ENCODE measurements at regions of chr16 and their contacts with region 1.

Region 1: GRCh38 chr16:20849587-20850390 is 43.5 kb downstream of the REXO5 start:
- DNase-seq: peak; percentile 42 to 69
- H3K4me3 ChIP-seq: no peak overlapping the region
- H3K27ac ChIP-seq: no peak overlapping the region
- H3K4me1 ChIP-seq: peaks cover 33% of the 10 kb centered on the region
- H3K27me3 ChIP-seq: no peaks in the 10 kb centered on the region
- CTCF ChIP-seq: peak; percentile 99

Region 2: DNA sequence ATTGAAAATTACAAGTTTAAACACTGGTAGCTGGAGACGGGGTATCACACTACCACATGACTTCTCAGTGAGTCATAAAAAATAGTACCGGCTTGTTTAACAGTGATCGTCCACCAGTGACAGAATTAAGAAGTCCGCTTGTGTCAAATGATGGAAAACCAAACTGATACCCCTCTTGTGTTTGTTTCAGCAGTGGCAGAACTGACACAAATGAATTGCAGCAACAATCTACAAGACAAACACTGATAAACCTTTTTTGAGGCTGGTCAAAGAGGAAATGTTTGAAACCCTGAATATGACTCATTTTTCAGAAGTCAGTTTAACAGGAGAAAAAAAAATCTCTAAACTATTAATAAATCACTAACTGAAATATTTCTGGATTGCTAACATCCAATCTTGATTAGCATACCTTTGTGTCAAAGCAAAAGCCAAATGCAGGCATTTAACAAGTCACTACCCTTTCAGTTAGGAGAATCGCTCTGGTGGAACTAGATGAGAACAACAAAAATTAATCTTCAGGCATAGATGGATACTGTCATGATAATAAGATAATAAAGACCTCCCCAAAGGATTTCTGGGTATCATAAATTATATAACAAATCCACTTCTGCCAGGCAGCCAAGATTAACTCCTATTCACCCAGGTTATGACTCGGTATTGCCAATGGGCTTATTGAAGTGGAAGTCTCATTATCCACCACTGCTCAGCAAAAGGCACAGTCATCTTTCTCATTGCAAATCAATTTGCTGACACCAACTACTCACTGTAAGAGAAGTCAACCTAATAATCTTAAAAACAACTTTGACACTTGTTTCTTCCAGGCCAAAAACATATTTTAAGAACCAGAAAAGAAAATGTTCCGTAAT is 29.6 kb after region 1 on chr16:
- CTCF ChIA-PET with region 1: no interaction called
- POLR2A ChIA-PET with region 1: no interaction called
- intact Hi-C with region 1: loop called (anchors 1 kb)
- DNase-seq: peak in 1 of 2 experiments; percentile 67
- H3K4me3 ChIP-seq: no peak overlapping the region
- H3K27ac ChIP-seq: peak overlapping the region; percentile 58
- H3K4me1 ChIP-seq: peaks cover 30% of the 10 kb centered on the region
- H3K27me3 ChIP-seq: no peaks in the 10 kb centered on the region
- CTCF ChIP-seq: no peak

Region 3: DNA sequence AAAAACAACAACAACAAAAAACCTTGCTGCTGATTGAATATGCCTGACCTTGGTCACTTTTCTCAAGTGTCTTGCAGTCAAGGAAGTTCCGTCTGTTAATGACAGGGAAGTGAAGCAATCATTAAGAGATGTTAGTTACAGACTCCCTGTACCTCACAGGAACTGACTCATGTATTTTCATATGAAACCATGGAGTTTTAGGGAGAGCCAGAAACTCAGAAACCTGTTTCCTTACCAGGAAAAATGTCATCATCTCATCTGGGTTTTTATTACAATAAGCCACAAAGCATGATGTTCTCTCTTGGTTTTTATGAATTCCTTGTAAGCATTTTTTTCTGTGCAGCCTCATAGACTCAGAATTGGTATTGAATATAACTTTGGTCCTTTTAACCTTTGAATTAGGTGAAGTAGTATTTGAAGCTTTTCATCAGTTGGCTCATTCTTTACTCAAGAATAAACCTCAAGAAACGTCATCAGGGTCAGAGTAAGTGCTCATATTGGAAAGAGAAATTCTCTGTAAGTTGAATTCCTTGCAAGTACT is 61.1 kb after region 1 on chr16:
- CTCF ChIA-PET with region 1: interaction called, 3 read pairs
- POLR2A ChIA-PET with region 1: interaction called, 13 read pairs
- intact Hi-C with region 1: no loop called
- DNase-seq: peak; percentile 20 to 99
- H3K4me3 ChIP-seq: peak overlapping the region; percentile 18; the same call in 1 of the 2 replicates
- H3K27ac ChIP-seq: peak overlapping the region; percentile 99
- H3K4me1 ChIP-seq: peaks cover 88% of the 10 kb centered on the region
- H3K27me3 ChIP-seq: no peaks in the 10 kb centered on the region
- CTCF ChIP-seq: no peak

Region 4: DNA sequence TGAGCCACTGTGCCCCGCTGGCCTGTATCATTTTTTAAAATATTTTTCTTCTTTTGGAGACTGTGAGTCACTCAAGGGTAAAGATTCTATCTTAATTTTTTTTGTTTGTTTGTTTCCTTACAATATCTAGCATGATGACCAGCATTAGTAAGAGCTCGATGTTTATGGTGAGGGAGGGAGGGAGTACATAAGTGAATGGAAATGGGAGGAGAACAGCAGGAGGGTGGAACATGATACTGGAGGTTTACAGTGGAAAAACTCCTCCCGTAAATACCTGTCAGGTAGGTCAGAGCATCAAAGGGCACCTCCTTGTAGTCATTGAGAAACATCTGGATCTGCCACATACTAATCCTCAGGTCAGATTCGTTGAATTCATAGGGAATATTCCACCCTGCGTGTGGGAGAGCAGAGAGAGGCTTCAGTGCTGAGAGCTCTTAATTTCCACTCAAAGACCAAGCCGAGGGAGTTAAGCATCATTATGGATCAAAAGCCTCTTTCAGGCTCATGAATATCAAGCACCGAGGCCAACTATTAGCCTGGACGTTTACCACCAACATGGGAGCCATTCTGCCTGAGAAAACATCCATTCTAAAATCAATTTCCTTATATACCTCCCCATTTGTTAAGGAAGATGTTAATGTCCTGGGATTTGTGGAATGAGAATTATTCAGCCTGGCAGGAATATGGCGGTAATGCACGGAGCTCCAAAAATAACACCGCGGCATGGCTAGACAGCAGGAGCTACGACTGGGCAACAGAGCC is 102.6 kb after region 1 on chr16:
- CTCF ChIA-PET with region 1: no interaction called
- POLR2A ChIA-PET with region 1: no interaction called
- intact Hi-C with region 1: loop called (anchors 2 kb)
- DNase-seq: peak; percentile 53 to 93
- H3K4me3 ChIP-seq: no peak overlapping the region
- H3K27ac ChIP-seq: peak overlapping the region; percentile 42
- H3K4me1 ChIP-seq: peaks cover 8% of the 10 kb centered on the region
- H3K27me3 ChIP-seq: no peaks in the 10 kb centered on the region
- CTCF ChIP-seq: no peak

Region 5: GRCh38 chr16:21083729-21084268 is 234.0 kb after region 1 on chr16:
- CTCF ChIA-PET with region 1: interaction called, 23 read pairs
- POLR2A ChIA-PET with region 1: no interaction called
- intact Hi-C with region 1: loop called (anchors 1 kb)
- DNase-seq: peak in 1 of 2 experiments; percentile 68
- H3K4me3 ChIP-seq: no peak overlapping the region
- H3K27ac ChIP-seq: no peak overlapping the region
- H3K4me1 ChIP-seq: no peaks in the 10 kb centered on the region
- H3K27me3 ChIP-seq: no peaks in the 10 kb centered on the region
- CTCF ChIP-seq: peak; percentile 81

Region 6: GRCh38 chr16:21158208-21159110 is 308.7 kb after region 1 on chr16 and contains the start of gene LDAF1:
- CTCF ChIA-PET with region 1: interaction called, 5 read pairs
- POLR2A ChIA-PET with region 1: no interaction called
- intact Hi-C with region 1: loop called (anchors 2 kb)
- DNase-seq: peak; percentile 66 to 89
- H3K4me3 ChIP-seq: peak within 1 kb of the TSS; percentile 87
- H3K27ac ChIP-seq: peak within 1 kb of the TSS; percentile 74
- H3K4me1 ChIP-seq: peaks cover 16% of the 10 kb centered on the region
- H3K27me3 ChIP-seq: no peaks in the 10 kb centered on the region
- CTCF ChIP-seq: no peak
- total RNA-seq, gene LDAF1: 47.6 and 69.9 TPM in 2 replicates

Region 7: GRCh38 chr16:22321339-22322001 is 1471.7 kb after region 1 on chr16:
- CTCF ChIA-PET with region 1: no interaction called
- POLR2A ChIA-PET with region 1: no interaction called
- intact Hi-C with region 1: loop called (anchors 2 kb)
- DNase-seq: peak; percentile 54 to 59
- H3K4me3 ChIP-seq: no peak overlapping the region
- H3K27ac ChIP-seq: no peak overlapping the region
- H3K4me1 ChIP-seq: no peaks in the 10 kb centered on the region
- H3K27me3 ChIP-seq: no peaks in the 10 kb centered on the region
- CTCF ChIP-seq: peak; percentile 94

Measured in PC-9 (cell line).